AG04449 (cell line): ENCODE measurements at regions of chrX and their contacts with region 1.

Region 1: GRCh38 chrX:14029425-14030173 is at the start of gene GEMIN8:
- DNase-seq: peak; percentile 36
- H3K4me3 ChIP-seq: peak within 1 kb of the TSS; percentile 65
- CTCF ChIP-seq: no peak

Region 2: GRCh38 chrX:13506574-13506973 is 523.0 kb before region 1 on chrX:
- CTCF ChIA-PET with region 1: interaction called, 17 read pairs
- POLR2A ChIA-PET with region 1: no interaction called
- DNase-seq: no peak
- H3K4me3 ChIP-seq: no peak overlapping the region
- CTCF ChIP-seq: peak; percentile 20

Region 3: DNA sequence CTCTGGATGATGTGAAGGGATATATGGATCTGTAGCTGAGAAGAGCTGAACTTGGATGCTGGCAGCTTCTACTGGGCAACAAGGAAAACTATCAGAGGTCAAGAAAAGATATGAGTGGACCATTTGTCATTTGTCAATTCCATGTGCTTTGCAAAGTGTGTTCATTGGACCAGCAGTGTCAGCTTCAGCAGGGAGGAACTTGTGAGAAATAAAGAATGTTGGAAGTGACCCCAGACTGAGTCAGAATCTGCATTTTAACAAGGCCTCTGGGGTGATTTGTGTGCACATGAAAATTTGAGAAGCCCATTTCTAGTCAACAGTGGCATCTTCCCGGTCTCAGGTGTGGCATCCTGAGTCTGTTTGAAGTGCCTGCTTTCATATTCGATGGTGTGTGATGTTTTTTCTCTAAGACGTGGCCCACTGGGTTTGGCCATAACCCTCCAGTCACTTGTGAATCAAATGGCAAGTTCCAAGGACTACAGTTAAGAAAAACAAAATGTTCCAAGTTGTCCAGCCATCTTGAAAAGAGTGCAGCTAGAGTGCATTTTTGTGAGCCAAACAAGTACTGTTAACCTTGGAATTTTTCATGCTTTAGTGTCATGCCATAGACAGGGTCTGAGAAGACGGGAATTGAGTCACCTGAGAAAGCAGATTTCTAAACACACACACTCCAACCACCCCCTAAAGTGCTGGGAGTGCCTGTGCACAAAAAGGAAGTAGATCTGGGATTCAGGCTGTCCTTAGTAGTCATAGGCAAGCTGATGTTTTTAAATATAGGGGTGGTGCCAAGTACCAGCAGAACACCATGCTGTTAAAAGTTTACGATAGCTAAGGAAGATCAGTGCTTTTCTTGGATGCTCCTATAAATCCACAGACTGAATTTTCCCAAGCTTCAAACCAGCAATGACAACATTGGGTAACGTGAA is 239.1 kb before region 1 on chrX:
- CTCF ChIA-PET with region 1: no interaction called
- POLR2A ChIA-PET with region 1: no interaction called
- DNase-seq: no peak
- H3K4me3 ChIP-seq: no peak overlapping the region
- CTCF ChIP-seq: no peak

Region 4: DNA sequence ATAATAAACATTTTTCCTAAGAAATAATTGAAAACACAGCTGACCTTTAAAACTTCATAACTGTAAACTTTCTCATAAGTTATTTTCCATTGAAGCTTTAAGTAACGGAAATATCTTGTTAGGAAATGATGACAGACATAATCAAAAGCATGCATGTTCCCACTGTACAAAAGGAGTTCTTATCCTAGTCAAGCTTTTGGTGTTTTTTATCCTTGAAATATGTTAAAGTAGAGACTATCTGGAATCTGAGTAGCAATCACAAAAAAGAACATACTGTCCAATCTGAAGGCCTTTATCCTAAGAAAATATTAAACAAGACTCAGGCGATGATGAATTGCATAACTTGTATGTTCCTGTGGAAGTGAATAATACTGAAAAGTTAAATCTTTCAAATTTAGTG is 14.3 kb before region 1 on chrX:
- CTCF ChIA-PET with region 1: no interaction called
- POLR2A ChIA-PET with region 1: no interaction called
- DNase-seq: no peak
- H3K4me3 ChIP-seq: no peak overlapping the region
- CTCF ChIP-seq: no peak